ENCODE measurements at regions of chr4 and their contacts with region 1.

Region 1: DNA sequence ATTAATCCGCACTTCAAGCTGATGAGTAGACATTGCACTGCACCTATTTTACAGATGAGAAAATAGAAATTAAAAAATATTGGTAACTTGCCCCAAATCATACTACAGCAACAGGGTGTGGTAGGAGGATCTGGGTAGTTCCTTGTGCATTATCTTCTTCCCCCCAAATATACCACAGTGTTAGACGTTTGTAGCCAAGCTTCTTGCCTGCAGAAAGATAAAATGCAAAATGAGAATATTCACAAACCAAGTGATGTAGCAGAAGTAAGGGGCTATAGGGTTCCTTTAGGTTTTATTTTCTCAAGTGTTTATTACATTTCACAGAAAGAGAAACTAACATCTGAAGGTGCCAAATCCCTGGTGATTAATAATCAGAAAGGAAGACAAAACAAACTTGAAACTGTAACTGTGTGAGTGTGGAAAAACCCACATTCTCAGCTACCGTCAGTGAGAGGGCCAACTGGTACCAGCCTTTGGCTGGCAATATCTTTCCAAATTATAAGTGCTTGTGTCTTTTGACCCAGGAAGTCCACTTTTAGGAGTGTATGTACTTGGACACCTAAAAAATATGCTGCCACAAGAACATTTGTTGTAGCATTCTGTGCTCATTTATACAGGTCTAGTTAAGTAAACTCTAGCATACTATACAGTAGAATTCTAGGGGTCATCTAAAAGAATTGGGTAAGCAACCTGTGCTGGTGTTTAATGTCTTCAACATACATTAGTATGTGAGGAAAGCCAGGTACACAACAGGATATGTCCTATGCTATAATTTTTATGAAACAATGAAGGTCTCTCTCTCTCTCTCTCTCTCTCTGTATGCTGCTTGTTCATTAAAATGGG is 6.7 kb upstream of the CD38 start:
- DNase-seq: peak; percentile 57
- H3K4me3 Mint-ChIP-seq: peak overlapping the region; percentile 41
- H3K27ac Mint-ChIP-seq: no peak overlapping the region
- H3K4me1 Mint-ChIP-seq: peaks cover 69% of the 10 kb centered on the region
- H3K27me3 Mint-ChIP-seq: peaks cover 8% of the 10 kb centered on the region

Region 2: DNA sequence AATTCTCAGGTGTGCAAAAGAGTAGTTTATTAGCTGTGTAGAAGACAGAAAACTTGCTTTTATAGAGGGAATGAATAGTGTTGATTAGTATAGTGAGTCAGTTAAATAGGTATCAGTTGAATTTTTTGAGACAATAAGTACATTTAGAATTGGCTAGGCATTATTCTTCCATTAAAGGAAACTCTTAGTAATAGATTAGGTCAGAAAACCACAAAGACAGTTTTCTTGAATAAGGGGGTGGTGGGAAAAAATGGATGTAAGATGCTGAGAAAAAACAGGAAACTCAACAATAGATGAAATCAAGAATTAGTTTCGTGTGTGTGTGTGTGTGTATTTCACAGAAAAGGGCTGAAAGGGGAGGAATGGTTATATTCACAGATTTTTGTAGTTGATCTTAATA is 23.5 kb after region 1 on chr4:
- CTCF ChIA-PET with region 1: no interaction called
- intact Hi-C with region 1: loop called (anchors 1 kb)
- DNase-seq: no peak
- H3K4me3 Mint-ChIP-seq: peak overlapping the region; percentile 39
- H3K27ac Mint-ChIP-seq: peak overlapping the region; percentile 47
- H3K4me1 Mint-ChIP-seq: peaks cover 53% of the 10 kb centered on the region
- H3K27me3 Mint-ChIP-seq: no peaks in the 10 kb centered on the region

Measured in activated naive CD4-positive, alpha-beta T cell treated with anti-CD3 and anti-CD28 coated beads for 36 hours (primary cell).